AG04450 (cell line): ENCODE measurements at regions of chr22 and their contacts with region 1.

Region 1: GRCh38 chr22:45645526-45646414 is 25.9 kb upstream of the ATXN10 start:
- DNase-seq: no peak
- H3K4me3 ChIP-seq: peak overlapping the region; percentile 38; the same call in 1 of the 2 replicates
- H3K27ac ChIP-seq: no peak overlapping the region
- H3K27me3 ChIP-seq: peaks cover 15% of the 10 kb centered on the region
- CTCF ChIP-seq: peak; percentile 72

Region 2: GRCh38 chr22:44719586-44720363 is 926.0 kb before region 1 on chr22:
- CTCF ChIA-PET with region 1: interaction called, 11 read pairs
- POLR2A ChIA-PET with region 1: no interaction called
- DNase-seq: no peak
- H3K4me3 ChIP-seq: no peak overlapping the region
- H3K27ac ChIP-seq: no peak overlapping the region
- H3K27me3 ChIP-seq: no peaks in the 10 kb centered on the region
- CTCF ChIP-seq: no peak

Region 3: DNA sequence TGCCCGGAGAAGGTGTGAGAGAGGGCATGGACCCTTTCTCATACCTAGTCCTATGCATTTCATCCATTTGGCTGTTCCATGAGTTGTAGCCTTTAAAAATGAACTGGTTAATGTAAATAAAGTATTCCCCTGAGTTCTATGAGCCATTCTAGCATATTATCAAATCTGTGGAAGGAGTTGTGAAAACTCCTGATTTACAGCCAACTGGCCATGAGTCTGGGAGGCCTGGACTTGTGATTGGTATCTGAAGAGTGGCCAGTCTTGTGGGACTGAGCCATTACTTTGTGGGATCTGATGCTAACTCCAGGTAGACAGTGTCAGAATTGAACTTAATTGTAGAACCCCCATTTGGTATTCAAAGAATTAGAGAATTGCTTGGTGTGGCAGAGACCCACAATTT is 287.6 kb before region 1 on chr22:
- CTCF ChIA-PET with region 1: no interaction called
- POLR2A ChIA-PET with region 1: no interaction called
- DNase-seq: no peak
- H3K4me3 ChIP-seq: no peak overlapping the region
- H3K27ac ChIP-seq: no peak overlapping the region
- H3K27me3 ChIP-seq: peaks cover 16% of the 10 kb centered on the region
- CTCF ChIP-seq: no peak

Region 4: DNA sequence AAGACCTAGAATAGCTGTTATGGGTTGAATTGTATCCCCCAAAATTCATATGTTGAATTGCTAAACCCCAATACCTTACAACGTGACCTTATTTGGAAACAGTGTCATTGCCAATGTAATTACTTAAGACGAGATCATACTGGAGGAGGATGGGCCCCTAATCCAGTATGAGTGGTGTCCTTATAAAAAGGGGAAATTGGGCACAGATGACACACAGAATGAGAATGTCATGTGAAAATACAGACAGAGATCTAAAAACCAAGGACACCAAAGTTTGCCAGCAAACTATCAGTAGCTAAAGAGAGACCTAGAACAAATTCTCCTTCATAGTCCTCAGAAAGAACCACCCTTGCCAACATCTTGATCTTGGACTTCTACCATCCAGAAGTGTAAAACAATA is 153.5 kb after region 1 on chr22:
- CTCF ChIA-PET with region 1: interaction called, 10 read pairs
- POLR2A ChIA-PET with region 1: no interaction called
- DNase-seq: no peak
- H3K4me3 ChIP-seq: no peak overlapping the region
- H3K27ac ChIP-seq: no peak overlapping the region
- H3K27me3 ChIP-seq: no peaks in the 10 kb centered on the region
- CTCF ChIP-seq: no peak